ENCODE measurements at regions of chr14 and their contacts with region 1.

Region 1: DNA sequence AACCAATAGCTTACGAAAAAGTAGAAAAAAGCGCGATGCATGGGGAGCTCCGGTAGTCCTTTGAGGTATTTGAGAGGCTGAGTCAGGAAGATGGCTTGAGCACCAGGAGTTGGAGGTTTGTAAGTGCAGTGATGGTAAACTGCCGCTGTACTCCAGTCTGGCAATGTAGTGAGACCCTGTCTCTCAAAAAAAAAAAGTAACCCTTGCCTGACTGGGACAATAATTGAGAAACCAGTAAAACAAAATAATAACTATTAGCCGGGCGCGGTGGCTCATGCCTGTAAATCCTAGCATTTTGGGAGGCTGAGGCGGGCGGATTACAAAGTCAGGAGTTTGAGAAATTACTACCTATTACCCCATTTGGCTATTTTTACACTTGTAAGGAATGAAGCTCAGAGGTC is 632 bp upstream of the ACOT2 start:
- DNase-seq: no peak
- H3K4me3 ChIP-seq: peak overlapping the region; percentile 62 to 83 (median 67)
- H3K27ac ChIP-seq: peak overlapping the region; percentile 90 to 95 (median 93)
- H3K4me1 ChIP-seq: peaks cover 9 to 28% (median 20%) of the 10 kb centered on the region in 4 donors
- H3K27me3 ChIP-seq: no peaks in the 10 kb centered on the region
- CTCF ChIP-seq: no peak
- EP300 ChIP-seq: no peak
- POLR2A ChIP-seq: no peak

Region 2: DNA sequence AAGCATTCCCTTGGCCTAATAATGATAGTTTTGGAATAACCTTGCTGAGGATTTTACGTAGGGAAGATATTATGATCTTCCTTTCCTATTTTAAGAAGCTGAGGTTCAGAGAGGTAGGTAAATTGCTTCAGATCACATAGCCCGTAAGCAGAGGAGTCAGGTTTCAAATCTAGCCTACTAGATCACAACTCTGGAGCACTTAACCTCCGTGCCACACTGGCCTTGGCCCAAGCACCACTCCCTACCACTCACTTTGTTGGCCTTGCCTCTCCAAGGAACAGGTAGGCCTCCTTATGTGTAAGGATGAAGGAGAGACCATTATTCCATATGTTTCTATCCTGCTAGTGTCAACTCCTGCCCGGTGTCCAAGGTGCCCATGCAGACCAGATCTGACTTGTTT is 43.9 kb before region 1 on chr14:
- in situ Hi-C with region 1: no loop called
- intact Hi-C with region 1: loop called (anchors 10 kb)
- DNase-seq: no peak
- H3K4me3 ChIP-seq: no peak overlapping the region
- H3K27ac ChIP-seq: no peak overlapping the region
- H3K4me1 ChIP-seq: no peaks in the 10 kb centered on the region
- H3K27me3 ChIP-seq: no peaks in the 10 kb centered on the region
- CTCF ChIP-seq: no peak
- EP300 ChIP-seq: no peak
- POLR2A ChIP-seq: no peak

Region 3: DNA sequence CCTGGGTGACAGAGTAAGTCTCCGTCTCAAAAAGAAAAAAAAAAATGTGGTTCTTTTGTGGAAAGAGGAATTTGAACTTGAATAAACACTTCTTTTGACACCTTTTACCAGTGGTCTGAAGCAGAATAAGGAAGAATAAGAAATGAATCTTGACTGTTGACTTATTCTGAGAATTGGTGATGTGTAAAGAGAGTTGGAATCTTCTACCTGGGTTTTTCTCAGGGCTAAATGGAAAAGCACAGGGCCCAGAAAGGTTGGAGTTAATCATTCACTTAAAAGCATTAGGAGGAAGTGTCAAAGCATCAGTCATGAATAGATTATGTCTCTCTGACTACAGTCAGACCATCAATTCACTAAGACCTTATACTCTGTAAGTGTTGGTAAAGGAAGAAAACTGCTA is 131.9 kb after region 1 on chr14:
- in situ Hi-C with region 1: no loop called
- intact Hi-C with region 1: no loop called
- DNase-seq: no peak
- H3K4me3 ChIP-seq: no peak overlapping the region
- H3K27ac ChIP-seq: no peak overlapping the region
- H3K4me1 ChIP-seq: peaks cover 0 to 22% (median 6%) of the 10 kb centered on the region in 4 donors
- H3K27me3 ChIP-seq: no peaks in the 10 kb centered on the region
- CTCF ChIP-seq: no peak
- EP300 ChIP-seq: no peak
- POLR2A ChIP-seq: no peak

Measured in transverse colon (tissue), 4 donors.